Prostate gland (tissue), 2 donors: ENCODE measurements at regions of chr12 and their contacts with region 1.

Region 1: GRCh38 chr12:11581179-11581755 is 68.2 kb upstream of the ETV6 start:
- DNase-seq: peak; percentile 75
- H3K4me3 ChIP-seq: no peak overlapping the region
- H3K27ac ChIP-seq: no peak overlapping the region
- H3K4me1 ChIP-seq: no peaks in the 10 kb centered on the region
- H3K27me3 ChIP-seq: no peaks in the 10 kb centered on the region
- CTCF ChIP-seq: peak; percentile 70 to 86 (median 76)
- POLR2A ChIP-seq: no peak

Region 2: GRCh38 chr12:11891754-11892386 is 310.6 kb after region 1 on chr12:
- intact Hi-C with region 1: loop called (anchors 10 kb)
- DNase-seq: no peak
- H3K4me3 ChIP-seq: no peak overlapping the region
- H3K27ac ChIP-seq: no peak overlapping the region
- H3K4me1 ChIP-seq: no peaks in the 10 kb centered on the region
- H3K27me3 ChIP-seq: no peaks in the 10 kb centered on the region
- CTCF ChIP-seq: no peak
- POLR2A ChIP-seq: no peak

Region 3: GRCh38 chr12:12032851-12033588 is 451.8 kb after region 1 on chr12:
- intact Hi-C with region 1: loop called (anchors 2 kb)
- DNase-seq: peak; percentile 84
- H3K4me3 ChIP-seq: peak overlapping the region; percentile 7 to 25
- H3K27ac ChIP-seq: peak overlapping the region; percentile 64 to 70
- H3K4me1 ChIP-seq: peaks cover 4% of the 10 kb centered on the region
- H3K27me3 ChIP-seq: no peaks in the 10 kb centered on the region
- CTCF ChIP-seq: peak; percentile 87 to 95 (median 89)
- POLR2A ChIP-seq: peak; percentile 3

Region 4: GRCh38 chr12:12327802-12328201 is 746.5 kb after region 1 on chr12:
- intact Hi-C with region 1: loop called (anchors 5 kb)
- DNase-seq: peak; percentile 35
- H3K4me3 ChIP-seq: no peak overlapping the region
- H3K27ac ChIP-seq: no peak overlapping the region
- H3K4me1 ChIP-seq: no peaks in the 10 kb centered on the region
- H3K27me3 ChIP-seq: no peaks in the 10 kb centered on the region
- CTCF ChIP-seq: peak in 3 of 4 experiments; percentile 60 to 72 (median 68)
- POLR2A ChIP-seq: no peak